WTC11 (cell line): ENCODE measurements at regions of chr1 and their contacts with region 1.

Region 1: GRCh38 chr1:29197585-29197924 is 15.9 kb upstream of the SRSF4 start:
- DNase-seq: peak; percentile 27
- ATAC-seq: peak; percentile 96
- H3K4me3 Mint-ChIP-seq: no peak overlapping the region
- H3K27ac Mint-ChIP-seq: no peak overlapping the region
- H3K4me1 Mint-ChIP-seq: peaks cover 6% of the 10 kb centered on the region
- H3K27me3 Mint-ChIP-seq: no peaks in the 10 kb centered on the region
- CTCF ChIP-seq: no peak

Region 2: DNA sequence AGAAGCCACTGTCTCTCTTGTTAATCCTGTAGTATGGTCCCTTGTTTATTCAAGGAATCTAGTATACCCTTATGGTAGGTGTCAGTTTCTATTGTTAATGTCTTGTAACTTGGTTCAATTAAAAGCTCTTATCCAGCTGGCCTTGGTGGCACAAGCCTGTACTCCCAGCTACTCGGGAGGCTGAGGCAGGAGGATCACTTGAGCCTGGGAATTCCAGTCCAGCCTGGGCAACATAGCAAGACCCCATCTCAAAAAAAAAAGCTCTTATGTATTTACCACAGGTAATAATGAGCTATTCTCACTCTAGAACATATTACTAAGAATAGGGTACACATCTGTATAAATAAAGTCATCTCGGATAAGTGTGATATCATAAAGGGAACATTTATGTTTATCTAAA is 120.4 kb before region 1 on chr1:
- CTCF ChIA-PET with region 1: no interaction called
- POLR2A ChIA-PET with region 1: no interaction called
- DNase-seq: no peak
- ATAC-seq: no peak
- H3K4me3 Mint-ChIP-seq: no peak overlapping the region
- H3K27ac Mint-ChIP-seq: no peak overlapping the region
- H3K4me1 Mint-ChIP-seq: no peaks in the 10 kb centered on the region
- H3K27me3 Mint-ChIP-seq: no peaks in the 10 kb centered on the region
- CTCF ChIP-seq: no peak

Region 3: DNA sequence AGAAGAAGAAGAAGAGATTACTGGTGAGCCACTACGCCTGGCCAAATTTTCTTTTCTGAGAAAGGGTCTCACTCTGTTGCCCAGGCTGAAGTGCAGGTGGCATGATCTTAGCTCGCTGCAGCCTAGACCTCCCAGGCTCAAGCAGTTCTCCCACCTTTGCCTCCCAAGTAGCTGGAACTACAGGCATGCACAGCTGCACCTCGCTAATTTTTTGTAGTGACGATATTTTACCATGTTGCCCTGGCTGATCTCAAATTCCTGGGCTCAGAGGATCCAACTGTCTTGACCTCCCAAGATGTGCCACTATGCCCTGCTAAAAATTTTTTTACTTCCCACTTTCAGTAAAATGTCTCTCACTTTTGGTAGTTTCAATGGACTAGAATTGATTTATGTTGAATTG is 98.3 kb before region 1 on chr1:
- CTCF ChIA-PET with region 1: no interaction called
- POLR2A ChIA-PET with region 1: no interaction called
- DNase-seq: no peak
- ATAC-seq: no peak
- H3K4me3 Mint-ChIP-seq: no peak overlapping the region
- H3K27ac Mint-ChIP-seq: no peak overlapping the region
- H3K4me1 Mint-ChIP-seq: peaks cover 15% of the 10 kb centered on the region
- H3K27me3 Mint-ChIP-seq: no peaks in the 10 kb centered on the region
- CTCF ChIP-seq: no peak

Region 4: GRCh38 chr1:29124366-29125236 is 73.0 kb before region 1 on chr1:
- CTCF ChIA-PET with region 1: interaction called, 45 read pairs
- POLR2A ChIA-PET with region 1: interaction called, 4 read pairs
- DNase-seq: peak; percentile 93
- ATAC-seq: peak; percentile 40
- H3K4me3 Mint-ChIP-seq: peak overlapping the region; percentile 65
- H3K27ac Mint-ChIP-seq: no peak overlapping the region; the same call in 1 of the 2 replicates
- H3K4me1 Mint-ChIP-seq: peaks cover 19% of the 10 kb centered on the region
- H3K27me3 Mint-ChIP-seq: peaks cover 23% of the 10 kb centered on the region
- CTCF ChIP-seq: 0 out of 2 replicates have a peak, but pooled peaks have one; percentile 36

Region 5: DNA sequence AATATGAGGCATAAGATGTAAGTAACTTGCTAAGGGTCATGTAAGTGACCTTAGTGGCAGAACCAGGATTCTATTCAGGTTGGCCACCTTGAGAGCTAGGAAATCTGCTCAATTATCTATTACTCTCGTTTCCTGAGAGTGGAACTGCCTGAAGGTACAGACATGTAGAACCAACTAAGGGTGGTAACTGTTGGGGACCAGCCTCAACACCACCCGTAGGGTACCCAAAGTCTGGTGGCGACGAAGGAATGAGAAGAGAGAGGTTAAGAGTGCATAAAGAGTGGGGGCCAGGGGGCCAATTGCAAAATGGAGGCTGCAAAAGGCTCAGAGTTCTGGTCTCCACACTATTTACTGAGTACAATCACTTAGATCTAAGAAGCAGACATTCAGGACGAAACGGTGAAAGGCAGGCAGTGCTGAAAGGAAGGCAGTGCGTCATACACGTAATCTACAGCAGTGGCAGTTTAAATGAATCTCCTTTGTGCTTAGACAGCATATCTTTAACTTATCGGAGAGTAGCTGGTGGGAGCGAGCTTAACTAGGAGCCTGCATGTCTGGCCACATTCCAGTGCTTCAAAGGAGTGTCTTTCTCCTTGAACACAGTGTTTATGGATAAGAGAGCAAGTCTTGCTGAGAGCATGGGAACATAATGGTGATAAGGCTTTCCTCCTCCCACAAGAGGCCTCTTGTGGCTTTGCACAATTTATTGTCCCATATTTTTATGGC is 40.8 kb before region 1 on chr1:
- CTCF ChIA-PET with region 1: interaction called, 11 read pairs
- POLR2A ChIA-PET with region 1: no interaction called
- DNase-seq: no peak
- ATAC-seq: peak; percentile 36
- H3K4me3 Mint-ChIP-seq: no peak overlapping the region
- H3K27ac Mint-ChIP-seq: peak overlapping the region; percentile 95
- H3K4me1 Mint-ChIP-seq: peaks cover 28% of the 10 kb centered on the region
- H3K27me3 Mint-ChIP-seq: no peaks in the 10 kb centered on the region
- CTCF ChIP-seq: no peak

Region 6: DNA sequence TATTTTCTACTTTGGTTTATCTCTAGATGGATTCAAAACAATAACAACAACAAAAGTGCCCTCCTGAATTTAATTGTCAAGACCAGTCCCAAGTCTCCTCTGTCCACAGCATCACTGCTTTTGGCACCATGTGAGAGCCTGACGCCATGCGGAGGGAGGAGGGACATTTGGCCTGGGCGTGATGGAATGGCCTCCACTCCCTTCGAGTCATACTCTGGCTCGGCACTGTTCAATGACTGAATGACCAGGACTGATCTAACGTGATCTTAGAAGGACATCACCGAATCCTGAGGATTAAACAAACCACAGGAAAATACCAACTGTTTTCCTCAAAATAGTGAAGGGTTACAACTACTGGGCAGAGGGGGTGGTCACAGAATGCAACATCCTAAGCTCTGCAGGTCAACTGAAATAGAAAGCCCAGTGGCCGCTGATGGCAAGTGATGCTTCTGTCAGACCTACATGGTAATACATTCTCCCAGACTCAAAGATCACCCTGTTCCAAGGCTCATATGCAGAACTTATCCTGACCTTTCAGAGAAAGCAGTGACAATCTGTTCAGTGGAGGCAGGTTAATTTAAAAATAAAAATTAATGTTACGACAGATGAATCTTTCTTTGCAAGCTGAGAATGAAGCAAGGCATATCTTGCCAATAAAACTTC is 34.9 kb before region 1 on chr1:
- CTCF ChIA-PET with region 1: interaction called, 15 read pairs
- POLR2A ChIA-PET with region 1: no interaction called
- DNase-seq: no peak
- ATAC-seq: no peak
- H3K4me3 Mint-ChIP-seq: no peak overlapping the region
- H3K27ac Mint-ChIP-seq: peak overlapping the region; percentile 34
- H3K4me1 Mint-ChIP-seq: peaks cover 71% of the 10 kb centered on the region
- H3K27me3 Mint-ChIP-seq: no peaks in the 10 kb centered on the region
- CTCF ChIP-seq: no peak